Right ventricle myocardium superior (tissue), 1 donor: ENCODE measurements at regions of chr14 and their contacts with region 1.

Region 1: GRCh38 chr14:92719890-92720323 is 28.5 kb downstream of the LGMN start:
- DNase-seq: no peak
- ATAC-seq: peak; percentile 26

Region 2: GRCh38 chr14:92160619-92161018 is 559.3 kb before region 1 on chr14:
- intact Hi-C with region 1: no loop called
- DNase-seq: no peak
- ATAC-seq: no peak

Region 3: GRCh38 chr14:92783816-92784431 is 64.0 kb after region 1 on chr14:
- intact Hi-C with region 1: loop called (anchors 2 kb)
- DNase-seq: no peak
- ATAC-seq: peak; percentile 68